ENCODE measurements at regions of chr2 and their contacts with region 1.

Region 1: GRCh38 chr2:78907081-78907480 is 118.4 kb upstream of the REG3G start:
- DNase-seq: no peak
- H3K4me3 ChIP-seq: no peak overlapping the region
- H3K27ac ChIP-seq: no peak overlapping the region
- H3K4me1 ChIP-seq: no peaks in the 10 kb centered on the region
- H3K27me3 ChIP-seq: no peaks in the 10 kb centered on the region
- CTCF ChIP-seq: no peak

Region 2: DNA sequence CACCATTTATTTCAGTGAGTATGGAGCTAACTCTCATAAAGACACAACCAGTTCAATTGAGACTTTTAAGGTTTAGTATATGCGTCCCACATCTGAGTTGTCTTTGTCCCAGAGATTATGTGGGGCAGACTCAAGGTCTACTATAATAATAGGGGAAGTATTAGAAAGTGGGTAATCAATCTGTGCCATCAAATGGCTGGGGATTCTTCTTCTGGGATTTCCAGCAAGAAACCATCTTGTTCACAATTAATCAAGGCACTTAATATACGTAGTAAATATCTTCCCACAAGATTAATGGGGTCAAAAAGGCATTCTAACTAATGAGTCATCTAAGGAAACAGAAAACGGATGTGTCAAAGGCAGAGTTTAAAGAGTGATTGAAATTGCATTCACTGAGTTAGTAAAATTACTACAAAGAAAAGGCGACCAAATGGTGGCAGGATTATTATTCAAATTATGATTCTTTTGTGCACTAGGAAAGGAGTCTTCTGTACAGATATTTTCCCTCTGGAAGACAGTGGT is 61.4 kb before region 1 on chr2:
- intact Hi-C with region 1: no loop called
- DNase-seq: no peak
- H3K4me3 ChIP-seq: no peak overlapping the region
- H3K27ac ChIP-seq: no peak overlapping the region
- H3K4me1 ChIP-seq: no peaks in the 10 kb centered on the region
- H3K27me3 ChIP-seq: no peaks in the 10 kb centered on the region
- CTCF ChIP-seq: no peak

Region 3: DNA sequence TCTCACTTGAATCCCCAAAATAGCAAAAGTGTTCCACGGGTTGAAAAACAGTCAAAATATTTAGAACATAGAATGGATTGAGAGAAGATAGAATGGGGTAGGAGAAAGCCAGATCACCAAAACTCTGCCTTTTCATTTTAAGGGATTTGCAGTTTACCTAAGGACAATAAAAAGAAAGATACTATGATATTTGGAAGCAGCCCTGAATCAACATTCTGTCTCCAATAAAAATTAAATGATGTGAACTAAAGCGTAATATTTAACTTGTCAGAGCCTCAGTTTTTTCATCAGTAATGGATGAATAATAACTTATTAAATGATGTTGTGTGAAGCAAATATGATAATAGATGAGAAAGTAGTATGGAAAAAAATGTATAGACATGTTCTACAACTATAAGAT is 18.2 kb after region 1 on chr2:
- intact Hi-C with region 1: loop called (anchors 1 kb)
- DNase-seq: no peak
- H3K4me3 ChIP-seq: no peak overlapping the region
- H3K27ac ChIP-seq: no peak overlapping the region
- H3K4me1 ChIP-seq: no peaks in the 10 kb centered on the region
- H3K27me3 ChIP-seq: no peaks in the 10 kb centered on the region
- CTCF ChIP-seq: no peak

Measured in left ventricle myocardium inferior (tissue), 1 donor.